ENCODE measurements at regions of chr5 and their contacts with region 1.

Region 1: GRCh38 chr5:157471709-157472108 is 11.7 kb downstream of the NIPAL4 start:
- DNase-seq: peak in 1 of 2 donors; percentile 16
- ATAC-seq: peak; percentile 34

Region 2: GRCh38 chr5:157431544-157432200 is 40.0 kb before region 1 on chr5:
- intact Hi-C with region 1: loop called in 1 of 2 experiments (anchors 5 kb)
- DNase-seq: no peak
- ATAC-seq: peak; percentile 93

Region 3: GRCh38 chr5:157511651-157512644 is 40.2 kb after region 1 on chr5:
- intact Hi-C with region 1: no loop called
- DNase-seq: peak; percentile 72 to 92
- ATAC-seq: peak; percentile 32

Measured in left colon (tissue), 2 donors.